Gastrocnemius medialis (tissue), 4 donors: ENCODE measurements at regions of chr6 and their contacts with region 1.

Region 1: GRCh38 chr6:27132532-27133280 is 114.8 kb upstream of the PRSS16 start:
- DNase-seq: peak; percentile 82 to 88
- ATAC-seq: peak; percentile 99
- H3K4me3 ChIP-seq: peak overlapping the region; percentile 61 to 67 (median 65)
- H3K27ac ChIP-seq: peak overlapping the region; percentile 79 to 83 (median 81)
- H3K4me1 ChIP-seq: peaks cover 0 to 4% of the 10 kb centered on the region in 2 donors
- H3K27me3 ChIP-seq: no peaks in the 10 kb centered on the region
- CTCF ChIP-seq: no peak
- POLR2A ChIP-seq: peak; percentile 83 to 90

Region 2: DNA sequence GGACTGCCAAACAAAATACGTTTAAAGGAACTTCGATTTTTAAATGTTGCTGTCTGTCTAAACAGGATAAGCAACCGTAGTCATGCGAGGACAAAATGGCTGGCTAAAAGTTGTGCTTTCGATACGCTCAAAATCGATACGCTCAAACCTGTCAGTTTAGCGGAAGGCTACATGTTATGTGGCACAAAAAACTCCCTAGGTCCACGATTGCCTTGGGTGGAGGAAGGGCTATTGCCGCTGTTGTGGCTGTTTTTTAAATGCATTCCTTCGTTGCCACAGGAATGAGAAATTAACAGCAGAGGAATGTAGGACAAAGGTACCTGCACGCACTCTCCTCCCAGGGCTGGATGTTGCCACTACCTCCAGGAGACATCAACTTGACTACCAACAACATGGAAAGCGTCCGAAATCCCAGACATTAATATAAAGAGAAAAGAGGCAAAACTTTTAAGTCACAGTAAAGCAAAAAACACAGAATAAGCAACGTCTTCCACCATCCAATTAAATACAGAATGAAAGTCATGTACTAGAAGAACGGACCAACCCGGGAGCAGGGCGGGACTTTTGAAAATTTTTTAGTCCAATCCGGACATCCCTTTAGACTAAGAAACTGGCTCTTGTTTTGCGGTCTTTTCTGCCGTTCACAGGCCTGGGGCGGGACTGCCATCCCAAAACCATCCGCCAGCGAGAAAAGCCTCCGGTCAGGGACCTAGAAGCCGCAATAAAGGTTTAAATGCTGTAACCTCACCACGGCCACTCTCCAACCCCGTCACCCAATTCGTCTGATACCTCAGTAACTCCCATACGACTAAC is 1077.6 kb before region 1 on chr6:
- in situ Hi-C with region 1: no loop called
- intact Hi-C with region 1: loop called (anchors 5 kb)
- DNase-seq: peak; percentile 84 to 86
- ATAC-seq: peak; percentile 76 to 80
- H3K4me3 ChIP-seq: peak overlapping the region; percentile 73 to 87 (median 82)
- H3K27ac ChIP-seq: peak overlapping the region; percentile 87 to 96 (median 90)
- H3K4me1 ChIP-seq: peaks cover 11 to 15% of the 10 kb centered on the region in 2 donors
- H3K27me3 ChIP-seq: no peaks in the 10 kb centered on the region
- CTCF ChIP-seq: peak in 2 of 5 experiments; percentile 14 to 29
- POLR2A ChIP-seq: peak in 1 of 2 donors; percentile 21

Region 3: DNA sequence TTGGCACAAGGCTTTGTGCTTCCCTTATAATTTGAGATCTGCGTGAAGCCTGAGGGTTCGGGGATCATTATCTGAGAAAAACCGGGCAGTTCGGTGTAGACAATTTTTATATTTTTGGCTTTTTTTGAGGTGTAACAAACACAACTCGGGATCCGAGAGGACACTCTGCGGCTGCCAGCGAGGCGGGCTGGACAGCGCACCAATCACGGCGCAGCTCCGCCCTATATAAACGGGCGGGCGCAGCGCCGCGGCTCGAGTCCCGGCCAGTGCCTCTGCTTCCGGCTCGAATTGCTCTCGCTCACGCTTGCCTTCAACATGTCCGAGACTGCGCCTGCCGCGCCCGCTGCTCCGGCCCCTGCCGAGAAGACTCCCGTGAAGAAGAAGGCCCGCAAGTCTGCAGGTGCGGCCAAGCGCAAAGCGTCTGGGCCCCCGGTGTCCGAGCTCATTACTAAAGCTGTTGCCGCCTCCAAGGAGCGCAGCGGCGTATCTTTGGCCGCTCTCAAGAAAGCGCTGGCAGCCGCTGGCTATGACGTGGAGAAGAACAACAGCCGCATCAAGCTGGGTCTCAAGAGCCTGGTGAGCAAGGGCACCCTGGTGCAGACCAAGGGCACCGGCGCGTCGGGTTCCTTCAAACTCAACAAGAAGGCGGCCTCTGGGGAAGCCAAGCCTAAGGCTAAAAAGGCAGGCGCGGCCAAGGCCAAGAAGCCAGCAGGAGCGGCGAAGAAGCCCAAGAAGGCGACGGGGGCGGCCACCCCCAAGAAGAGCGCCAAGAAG is 976.4 kb before region 1 on chr6:
- in situ Hi-C with region 1: loop called in 1 of 4 experiments (anchors 25 kb)
- intact Hi-C with region 1: loop called (anchors 2 kb)
- DNase-seq: peak; percentile 81 to 89
- ATAC-seq: peak; percentile 70 to 76
- H3K4me3 ChIP-seq: peak overlapping the region; percentile 71 to 95 (median 77)
- H3K27ac ChIP-seq: peak overlapping the region; percentile 88 to 97 (median 93)
- H3K4me1 ChIP-seq: peaks cover 11 to 23% of the 10 kb centered on the region in 2 donors
- H3K27me3 ChIP-seq: no peaks in the 10 kb centered on the region
- CTCF ChIP-seq: no peak
- POLR2A ChIP-seq: peak; percentile 99

Region 4: GRCh38 chr6:26596579-26597388 is 535.9 kb before region 1 on chr6 and contains the start of gene ABT1:
- in situ Hi-C with region 1: no loop called
- intact Hi-C with region 1: loop called (anchors 5 kb)
- DNase-seq: peak; percentile 96 to 98
- ATAC-seq: peak; percentile 98 to 99
- H3K4me3 ChIP-seq: peak within 1 kb of the TSS; percentile 82 to 97 (median 90)
- H3K27ac ChIP-seq: peak within 1 kb of the TSS; percentile 86 to 93 (median 90)
- H3K4me1 ChIP-seq: peaks cover 11 to 19% of the 10 kb centered on the region in 2 donors
- H3K27me3 ChIP-seq: peaks cover 21 to 27% (median 23%) of the 10 kb centered on the region in 3 donors
- CTCF ChIP-seq: peak in 1 of 5 experiments; percentile 31
- POLR2A ChIP-seq: peak; percentile 58 to 66
- total RNA-seq, gene ABT1: 7.1 to 13.2 (median 9.5) TPM

Region 5: DNA sequence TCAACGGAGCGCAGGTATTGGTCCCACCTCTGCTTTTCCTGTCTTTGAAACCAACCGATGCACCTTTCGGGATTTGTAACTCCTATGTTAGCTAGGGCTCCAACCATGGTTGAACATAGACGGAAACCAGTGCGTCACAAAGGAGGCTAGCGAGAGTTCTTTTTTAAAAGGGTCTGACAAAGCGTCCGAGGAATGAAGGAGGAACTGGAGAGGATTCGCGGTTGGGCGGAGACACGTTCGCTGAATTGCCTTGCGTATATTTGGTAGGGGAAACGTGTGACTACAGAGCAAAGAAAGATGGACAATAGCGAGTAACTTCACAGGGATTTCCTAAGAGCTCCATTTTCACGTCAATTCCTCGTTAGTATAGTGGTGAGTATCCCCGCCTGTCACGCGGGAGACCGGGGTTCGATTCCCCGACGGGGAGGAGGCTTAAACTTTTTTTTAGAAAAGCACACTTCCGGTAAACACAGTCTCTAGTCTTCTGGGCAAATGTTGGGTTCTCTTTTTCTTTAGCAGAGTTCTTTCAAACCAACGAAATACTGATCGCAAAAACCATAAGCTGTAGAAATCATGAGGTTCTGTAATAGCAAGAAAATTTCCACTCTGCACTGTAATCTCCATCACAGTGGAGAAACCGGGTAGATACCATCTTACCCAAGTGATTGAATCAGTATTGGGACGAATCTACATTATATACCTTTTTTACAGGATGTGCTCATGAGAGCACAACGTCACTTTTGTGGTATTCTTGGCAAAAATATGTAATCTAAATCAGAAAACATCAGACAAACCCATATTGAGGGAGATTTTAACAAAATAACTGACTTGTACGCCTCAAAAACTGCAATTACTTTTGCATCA is 346.8 kb after region 1 on chr6:
- in situ Hi-C with region 1: no loop called
- intact Hi-C with region 1: loop called (anchors 2 kb)
- DNase-seq: peak; percentile 49 to 53
- ATAC-seq: peak; percentile 87 to 89
- H3K4me3 ChIP-seq: peak overlapping the region; percentile 71 to 87 (median 80)
- H3K27ac ChIP-seq: peak overlapping the region; percentile 89 to 94 (median 90)
- H3K4me1 ChIP-seq: peaks cover 0 to 11% of the 10 kb centered on the region in 2 donors
- H3K27me3 ChIP-seq: no peaks in the 10 kb centered on the region
- CTCF ChIP-seq: no peak
- POLR2A ChIP-seq: peak; percentile 23 to 36